Common myeloid progenitor, CD34-positive (primary cell): ENCODE measurements at regions of chr10 and their contacts with region 1.

Region 1: GRCh38 chr10:13536674-13537366 is 8.0 kb upstream of the BEND7 start:
- DNase-seq: peak; percentile 57 to 71 (median 63)
- H3K4me3 ChIP-seq: peak overlapping the region in 2 of 7 experiments; percentile 35 to 64
- H3K27ac ChIP-seq: no peak overlapping the region
- H3K4me1 ChIP-seq: peaks cover 0 to 3% (median 2%) of the 10 kb centered on the region in 4 experiments
- H3K27me3 ChIP-seq: peaks cover 0 to 6% (median 0%) of the 10 kb centered on the region in 5 experiments

Region 2: DNA sequence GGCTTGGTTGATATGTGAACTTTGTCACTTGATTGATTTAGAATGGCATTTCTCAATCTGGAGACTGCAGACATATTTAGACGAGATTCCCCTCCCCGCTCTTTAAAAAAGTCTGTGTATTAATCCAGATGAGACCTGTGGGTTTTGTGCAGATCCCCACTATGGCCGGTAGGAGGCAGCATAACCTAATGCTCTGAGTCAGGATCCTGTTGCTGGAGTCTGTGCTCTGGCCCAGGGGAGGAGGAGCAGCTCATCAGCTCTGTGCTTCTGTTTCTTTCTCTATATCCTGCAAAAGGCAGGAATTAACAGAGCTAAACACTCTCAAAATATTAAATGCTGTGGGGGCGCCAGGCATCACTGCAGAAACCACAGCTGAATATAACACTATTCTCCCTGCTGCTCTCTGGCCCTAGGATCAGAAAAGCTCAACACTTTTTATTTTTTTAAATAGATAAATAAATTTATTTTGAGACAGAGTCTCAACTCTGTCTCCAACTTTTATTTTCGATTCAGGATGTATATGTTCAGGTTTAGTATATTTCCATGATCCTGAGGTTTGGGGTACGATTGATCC is 164.8 kb before region 1 on chr10:
- CTCF ChIA-PET with region 1: interaction called, 24 read pairs
- POLR2A ChIA-PET with region 1: interaction called, 3 read pairs
- DNase-seq: peak; percentile 87 to 95 (median 92)
- H3K4me3 ChIP-seq: no peak overlapping the region
- H3K27ac ChIP-seq: no peak overlapping the region
- H3K4me1 ChIP-seq: no peaks in the 10 kb centered on the region
- H3K27me3 ChIP-seq: no peaks in the 10 kb centered on the region

Region 3: DNA sequence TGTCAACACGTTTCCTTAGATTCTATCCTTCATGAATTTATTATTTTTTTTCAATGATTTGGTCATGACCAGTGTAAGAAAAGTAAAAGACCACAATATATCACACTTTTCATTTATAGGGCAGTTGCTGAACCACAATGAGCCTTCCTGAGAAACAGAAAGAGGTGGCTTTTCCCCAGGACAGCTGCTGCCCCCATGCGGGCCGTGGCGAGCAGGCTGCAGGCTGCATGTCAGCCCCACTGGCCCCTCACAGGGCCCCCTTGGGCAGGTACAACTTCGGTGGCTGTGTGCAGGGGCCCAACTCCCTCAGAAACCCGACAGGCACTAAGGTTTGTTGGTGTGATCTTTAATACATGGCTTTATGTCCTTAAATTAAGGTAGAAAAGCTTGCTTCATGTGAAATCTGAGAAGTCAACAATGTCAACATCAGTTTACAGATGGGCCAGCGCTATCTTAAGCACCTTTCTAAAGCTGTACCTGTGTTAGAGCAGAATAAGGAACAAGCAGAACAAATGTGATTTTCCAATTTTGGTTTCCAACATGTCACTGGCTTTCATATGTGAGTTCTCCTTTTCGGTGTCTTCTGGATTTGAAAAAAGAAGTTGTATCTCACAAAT is 18.6 kb before region 1 on chr10:
- CTCF ChIA-PET with region 1: interaction called, 10 read pairs
- POLR2A ChIA-PET with region 1: no interaction called
- DNase-seq: peak in 2 of 3 donors; percentile 20 to 28
- H3K4me3 ChIP-seq: no peak overlapping the region
- H3K27ac ChIP-seq: no peak overlapping the region
- H3K4me1 ChIP-seq: no peaks in the 10 kb centered on the region
- H3K27me3 ChIP-seq: peaks cover 0 to 4% (median 0%) of the 10 kb centered on the region in 5 experiments

Region 4: DNA sequence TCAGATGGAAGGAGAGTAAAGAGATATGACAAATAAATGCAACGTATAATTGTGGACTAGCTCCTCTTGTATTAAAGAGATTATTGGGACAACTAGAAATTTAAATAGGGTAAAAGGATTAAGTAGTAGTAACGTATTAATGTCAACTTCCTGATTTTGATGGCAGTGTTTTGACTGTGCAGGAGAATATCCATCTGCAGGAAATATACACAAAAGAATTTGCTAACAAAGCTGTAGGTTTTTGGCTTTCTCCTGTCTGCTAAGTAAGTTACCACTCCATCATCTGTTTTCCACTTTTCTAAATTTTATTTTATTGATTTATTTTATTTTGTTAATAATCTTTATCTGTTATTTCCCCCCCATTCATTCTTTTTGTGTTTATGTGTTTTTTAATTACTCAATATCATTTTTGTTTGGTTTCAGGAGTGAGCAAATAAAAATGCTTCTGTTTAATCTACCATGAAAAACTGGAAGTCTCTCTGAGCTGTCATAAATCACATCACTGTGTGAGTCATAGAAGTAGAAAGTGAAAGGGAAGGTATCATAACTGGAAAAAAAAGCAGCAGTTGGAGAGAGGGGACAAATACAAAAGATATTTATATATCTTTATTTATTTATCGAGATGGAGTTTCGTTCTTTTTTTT is 20.0 kb after region 1 on chr10:
- CTCF ChIA-PET with region 1: interaction called, 12 read pairs
- POLR2A ChIA-PET with region 1: no interaction called
- DNase-seq: peak; percentile 82 to 95 (median 92)
- H3K4me3 ChIP-seq: peak overlapping the region in 1 of 7 experiments; percentile 20
- H3K27ac ChIP-seq: no peak overlapping the region
- H3K4me1 ChIP-seq: peaks cover 7 to 10% (median 9%) of the 10 kb centered on the region in 4 experiments
- H3K27me3 ChIP-seq: no peaks in the 10 kb centered on the region